HEK293T (cell line): ENCODE measurements at regions of chr13 and their contacts with region 1.

Region 1: DNA sequence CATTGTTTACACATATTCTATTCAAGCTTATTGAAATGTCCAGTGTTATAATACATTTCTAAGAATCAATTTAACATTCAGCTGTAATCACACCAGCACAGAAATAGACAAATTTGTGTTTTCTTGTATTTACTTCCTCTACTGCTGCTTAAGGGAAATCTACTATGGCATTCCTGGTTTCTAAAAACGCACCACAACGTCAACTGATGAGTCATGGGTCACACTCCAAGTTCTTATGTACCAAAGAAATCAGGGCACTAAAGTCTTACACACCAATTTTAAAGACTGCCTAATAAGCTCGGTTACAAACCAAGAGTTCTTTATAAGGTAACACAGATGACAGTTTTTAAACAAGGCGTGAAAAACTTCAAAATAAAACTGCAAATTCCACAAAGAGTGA is 13.2 kb downstream of the LNX2 start:
- DNase-seq: no peak

Region 2: GRCh38 chr13:27449936-27450828 is 156.9 kb before region 1 on chr13 and contains the start of gene MTIF3:
- CTCF ChIA-PET with region 1: no interaction called
- POLR2A ChIA-PET with region 1: no interaction called
- DNase-seq: peak; percentile 86

Region 3: GRCh38 chr13:27620377-27621115 is 13.4 kb after region 1 on chr13 and contains the start of gene LNX2:
- CTCF ChIA-PET with region 1: no interaction called
- POLR2A ChIA-PET with region 1: interaction called, 13 read pairs
- DNase-seq: peak; percentile 92